ENCODE measurements at regions of chr3 and their contacts with region 1.

Region 1: GRCh38 chr3:82329300-82329699 is 567.9 kb upstream of the GBE1 start:
- DNase-seq: no peak
- H3K4me3 ChIP-seq: no peak overlapping the region
- H3K27ac ChIP-seq: no peak overlapping the region
- H3K4me1 ChIP-seq: no peaks in the 10 kb centered on the region
- H3K27me3 ChIP-seq: no peaks in the 10 kb centered on the region
- CTCF ChIP-seq: no peak
- EP300 ChIP-seq: no peak
- POLR2A ChIP-seq: no peak
- RAD21 ChIP-seq: no peak

Region 2: DNA sequence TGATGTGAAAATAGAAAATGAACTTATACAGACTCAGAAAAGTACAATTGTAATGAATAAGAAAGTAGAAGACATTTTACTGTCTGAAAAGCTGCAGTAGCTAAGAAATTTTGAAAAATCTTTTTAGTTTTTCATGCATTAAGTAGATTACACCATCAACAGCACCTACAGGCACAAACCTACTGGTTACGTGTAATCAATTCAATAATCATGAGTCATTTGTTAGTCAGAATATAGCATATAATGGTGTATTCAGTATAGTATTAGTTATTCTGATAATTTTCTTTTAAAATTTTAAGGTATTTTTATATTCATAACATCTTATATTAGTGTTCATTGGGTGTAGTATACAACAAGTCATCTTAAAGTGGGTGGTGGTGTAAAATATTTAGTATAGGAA is 17.4 kb before region 1 on chr3:
- CTCF ChIA-PET with region 1: interaction called, 11 read pairs
- POLR2A ChIA-PET with region 1: no interaction called
- DNase-seq: no peak
- H3K4me3 ChIP-seq: no peak overlapping the region
- H3K27ac ChIP-seq: no peak overlapping the region
- H3K4me1 ChIP-seq: no peaks in the 10 kb centered on the region
- H3K27me3 ChIP-seq: no peaks in the 10 kb centered on the region
- CTCF ChIP-seq: no peak
- EP300 ChIP-seq: no peak
- POLR2A ChIP-seq: no peak
- RAD21 ChIP-seq: no peak